K562 (cell line): ENCODE measurements at regions of chr22 and their contacts with region 1.

Region 1: DNA sequence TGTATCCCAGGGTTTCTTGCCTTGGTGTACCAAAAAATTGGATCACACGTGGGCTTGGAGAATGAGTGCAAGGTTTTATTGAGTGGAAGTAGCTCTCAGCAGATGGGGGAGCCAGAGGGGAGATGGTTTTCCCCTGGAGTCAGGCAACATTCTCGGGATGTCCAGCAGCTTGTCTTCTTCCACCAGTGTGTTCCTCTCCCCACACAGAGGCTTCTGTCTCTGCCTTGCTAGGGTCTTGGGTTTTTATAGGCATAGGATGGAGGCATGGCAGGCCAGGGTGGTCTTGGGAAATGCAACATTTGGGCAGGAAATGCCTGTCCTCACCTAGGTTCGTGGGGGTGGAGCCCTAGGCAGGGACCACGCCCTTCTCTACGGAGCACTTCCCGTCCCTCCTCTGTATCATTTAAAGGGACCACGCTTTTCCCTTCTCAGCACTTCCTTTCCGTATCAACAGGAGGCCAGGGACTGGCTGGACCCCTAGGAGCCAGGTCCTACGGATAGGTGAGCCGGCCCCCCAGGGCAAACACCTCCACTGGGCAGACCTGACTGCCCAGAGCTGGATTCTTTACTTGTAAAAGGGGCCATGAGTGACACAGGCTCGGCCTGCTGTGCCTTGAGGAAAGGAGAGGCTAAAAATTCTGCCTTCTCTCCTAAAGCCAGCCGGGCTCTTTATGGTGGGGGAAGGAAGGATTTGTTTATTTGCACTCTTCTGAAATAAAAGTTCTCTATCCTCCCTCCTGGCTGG is 55.3 kb upstream of the CCDC188 start:
- DNase-seq: peak; percentile 94 to 99 (median 96)
- ATAC-seq: peak; percentile 92
- H3K4me3 ChIP-seq: peak overlapping the region; percentile 53
- H3K27ac ChIP-seq: peak overlapping the region; percentile 67
- H3K4me1 ChIP-seq: peaks cover 23 to 83% of the 10 kb centered on the region in 2 experiments
- H3K27me3 ChIP-seq: peaks cover 19 to 24% of the 10 kb centered on the region in 2 experiments; a peak in 4 of 5 replicates
- CTCF ChIP-seq: peak in 1 of 3 experiments; percentile 18; a peak in 2 of 6 replicates
- EP300 ChIP-seq: peak; percentile 20; the same call in 1 of the 2 replicates
- POLR2A ChIP-seq: peak; percentile 97
- RAD21 ChIP-seq: no peak

Region 2: GRCh38 chr22:19772422-19773324 is 433.5 kb before region 1 on chr22:
- CTCF ChIA-PET with region 1: no interaction called
- POLR2A ChIA-PET with region 1: interaction called, 3 read pairs
- in situ Hi-C with region 1: no loop called
- intact Hi-C with region 1: loop called (anchors 5 kb)
- DNase-seq: peak; percentile 65 to 73 (median 69)
- ATAC-seq: peak; percentile 54
- H3K4me3 ChIP-seq: no peak overlapping the region
- H3K27ac ChIP-seq: peak overlapping the region; percentile 11; the same call in 1 of the 3 replicates
- H3K4me1 ChIP-seq: peaks cover 38 to 77% of the 10 kb centered on the region in 2 experiments
- H3K27me3 ChIP-seq: peaks cover 0 to 9% of the 10 kb centered on the region in 2 experiments; a peak in 2 of 5 replicates
- CTCF ChIP-seq: peak in 2 of 3 experiments; percentile 34 to 37; a peak in 2 of 6 replicates
- EP300 ChIP-seq: no peak
- POLR2A ChIP-seq: no peak
- RAD21 ChIP-seq: peak in 1 of 2 experiments; percentile 51; a peak in 2 of 4 replicates

Region 3: DNA sequence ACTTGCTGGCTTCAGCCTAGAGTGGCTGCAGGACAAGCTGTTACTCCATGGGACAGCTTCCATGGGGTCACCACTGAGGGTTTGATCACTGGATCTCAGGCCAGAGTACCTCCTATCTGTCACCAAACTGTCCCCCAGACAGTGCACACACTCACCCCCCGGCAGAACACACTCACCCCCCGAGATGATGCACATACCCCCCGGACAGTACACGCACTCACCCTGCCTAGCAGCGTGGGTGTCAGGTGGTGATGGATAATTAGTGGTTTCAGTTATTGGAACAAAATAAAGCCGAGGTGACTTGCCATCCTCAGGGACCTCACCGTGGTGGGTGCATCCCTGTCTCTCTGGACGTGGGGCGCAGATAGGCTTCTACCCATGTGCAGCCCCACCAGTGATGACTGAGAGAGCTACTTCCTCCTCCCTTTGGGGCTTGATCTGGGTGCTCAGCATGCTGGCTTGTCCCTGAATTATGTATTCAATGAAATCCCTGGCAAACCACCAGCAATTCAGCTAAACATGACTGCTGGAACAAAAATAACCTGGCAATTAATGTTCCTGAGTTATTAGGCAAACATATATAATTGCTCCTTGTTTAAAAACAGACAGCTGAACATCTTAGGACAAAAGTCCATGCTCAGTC is 166.3 kb before region 1 on chr22:
- CTCF ChIA-PET with region 1: no interaction called
- POLR2A ChIA-PET with region 1: no interaction called
- in situ Hi-C with region 1: no loop called
- intact Hi-C with region 1: no loop called
- DNase-seq: no peak
- ATAC-seq: no peak
- H3K4me3 ChIP-seq: no peak overlapping the region
- H3K27ac ChIP-seq: no peak overlapping the region
- H3K4me1 ChIP-seq: peaks cover 11 to 42% of the 10 kb centered on the region in 2 experiments; a peak in 4 of 5 replicates
- H3K27me3 ChIP-seq: no peaks in the 10 kb centered on the region
- CTCF ChIP-seq: no peak
- EP300 ChIP-seq: no peak
- POLR2A ChIP-seq: 0 out of 2 replicates have a peak, but pooled peaks have one; percentile 14
- RAD21 ChIP-seq: no peak

Region 4: GRCh38 chr22:20164863-20165262 is 41.3 kb before region 1 on chr22:
- CTCF ChIA-PET with region 1: no interaction called
- POLR2A ChIA-PET with region 1: interaction called, 6 read pairs
- in situ Hi-C with region 1: no loop called
- intact Hi-C with region 1: loop called (anchors 5 kb)
- DNase-seq: no peak
- ATAC-seq: no peak
- H3K4me3 ChIP-seq: no peak overlapping the region
- H3K27ac ChIP-seq: no peak overlapping the region
- H3K4me1 ChIP-seq: peaks cover 0 to 18% of the 10 kb centered on the region in 2 experiments; a peak in 1 of 5 replicates
- H3K27me3 ChIP-seq: peaks cover 39 to 54% of the 10 kb centered on the region in 2 experiments; a peak in 4 of 5 replicates
- CTCF ChIP-seq: no peak
- EP300 ChIP-seq: no peak
- POLR2A ChIP-seq: no peak
- RAD21 ChIP-seq: no peak

Region 5: DNA sequence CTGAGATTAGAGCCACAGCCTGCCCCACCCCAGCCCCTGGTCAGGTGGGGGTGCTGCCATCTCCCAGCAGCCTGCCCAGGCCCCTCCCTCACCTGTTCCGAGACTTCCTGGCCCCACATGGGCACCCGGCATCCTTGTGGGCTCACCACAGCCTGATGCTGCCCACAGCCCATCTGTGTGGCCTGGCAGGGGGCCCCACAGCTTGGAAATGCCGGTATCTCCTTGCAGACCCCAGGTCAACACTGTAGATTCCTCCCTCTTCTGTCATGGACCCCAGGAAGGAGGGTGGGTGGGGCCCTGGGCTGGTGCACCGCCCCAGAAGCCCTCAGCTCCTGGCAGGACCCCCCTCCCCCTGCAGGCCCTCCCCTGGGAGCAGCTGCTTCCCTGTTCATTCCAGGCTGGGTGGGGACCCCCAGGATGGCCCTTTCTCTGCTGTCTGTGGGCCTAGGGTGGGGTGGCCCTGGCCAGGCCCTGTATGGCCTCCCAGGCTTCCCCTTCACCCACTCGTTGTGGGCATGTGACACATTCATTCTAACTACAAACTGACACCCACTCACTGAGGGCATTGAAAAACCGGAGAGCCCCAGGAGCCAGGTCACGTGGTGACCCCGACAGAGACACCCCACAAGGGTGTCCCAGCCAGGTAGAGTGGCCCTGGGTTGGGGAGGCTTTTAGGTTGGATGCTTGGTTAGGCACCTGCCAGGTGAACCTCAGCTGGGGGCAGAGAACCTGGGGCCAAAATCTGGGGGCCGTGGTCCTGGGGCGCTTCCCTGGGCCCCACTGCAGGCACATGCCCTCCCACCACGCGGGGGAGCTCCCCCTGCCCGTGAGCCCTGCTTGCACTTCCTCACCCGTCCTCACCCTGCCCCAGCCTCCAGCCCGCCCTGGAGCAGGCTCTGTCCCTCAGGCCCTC is 11.2 kb before region 1 on chr22:
- CTCF ChIA-PET with region 1: no interaction called
- POLR2A ChIA-PET with region 1: interaction called, 12 read pairs
- in situ Hi-C with region 1: no loop called
- intact Hi-C with region 1: no loop called
- DNase-seq: no peak
- ATAC-seq: peak; percentile 27; the same call in 2 of the 3 replicates
- H3K4me3 ChIP-seq: no peak overlapping the region
- H3K27ac ChIP-seq: no peak overlapping the region
- H3K4me1 ChIP-seq: peaks cover 0 to 49% of the 10 kb centered on the region in 2 experiments; a peak in 2 of 5 replicates
- H3K27me3 ChIP-seq: peaks cover 84 to 95% of the 10 kb centered on the region in 2 experiments
- CTCF ChIP-seq: peak; percentile 29 to 57 (median 39); a peak in 5 of 6 replicates
- EP300 ChIP-seq: no peak
- POLR2A ChIP-seq: no peak
- RAD21 ChIP-seq: peak in 1 of 2 experiments; percentile 29; a peak in 1 of 4 replicates

Region 6: DNA sequence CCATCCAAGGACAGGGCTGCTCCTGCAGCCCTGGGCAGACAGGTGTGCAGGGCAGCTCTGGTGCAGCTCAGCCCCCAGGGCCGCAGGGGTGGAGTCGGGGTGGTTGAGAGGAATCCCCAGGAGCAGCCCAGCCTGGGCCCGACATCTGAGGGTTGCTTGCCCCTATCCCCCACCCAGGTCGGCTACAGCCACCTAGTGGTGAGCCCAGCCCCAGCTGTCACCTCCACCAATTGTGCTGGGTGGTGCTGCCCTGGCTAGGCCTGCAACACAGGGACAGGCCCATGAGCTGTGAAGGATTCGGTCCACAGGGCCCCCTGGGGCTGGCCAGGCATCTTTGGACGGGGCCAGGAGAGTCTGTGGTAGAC is 32.4 kb after region 1 on chr22:
- CTCF ChIA-PET with region 1: no interaction called
- POLR2A ChIA-PET with region 1: interaction called, 8 read pairs
- in situ Hi-C with region 1: no loop called
- intact Hi-C with region 1: loop called (anchors 2 kb)
- DNase-seq: peak; percentile 89 to 99 (median 98)
- ATAC-seq: peak; percentile 91
- H3K4me3 ChIP-seq: no peak overlapping the region
- H3K27ac ChIP-seq: no peak overlapping the region
- H3K4me1 ChIP-seq: peaks cover 7 to 86% of the 10 kb centered on the region in 2 experiments; a peak in 3 of 5 replicates
- H3K27me3 ChIP-seq: peaks cover 43 to 98% of the 10 kb centered on the region in 2 experiments
- CTCF ChIP-seq: peak; percentile 98 to 99 (median 99)
- EP300 ChIP-seq: no peak
- POLR2A ChIP-seq: no peak
- RAD21 ChIP-seq: peak in 1 of 2 experiments; percentile 97; a peak in 2 of 4 replicates

Region 7: GRCh38 chr22:20268279-20269012 is 62.3 kb after region 1 on chr22 and contains the start of gene RTN4R:
- CTCF ChIA-PET with region 1: interaction called, 10 read pairs
- POLR2A ChIA-PET with region 1: interaction called, 3 read pairs
- in situ Hi-C with region 1: no loop called
- intact Hi-C with region 1: loop called (anchors 1 kb)
- DNase-seq: peak; percentile 93 to 99 (median 96)
- ATAC-seq: peak; percentile 90
- H3K4me3 ChIP-seq: peak within 1 kb of the TSS; percentile 48
- H3K27ac ChIP-seq: no peak within 1 kb of the TSS
- H3K4me1 ChIP-seq: peaks cover 4 to 69% of the 10 kb centered on the region in 2 experiments; a peak in 4 of 5 replicates
- H3K27me3 ChIP-seq: peaks cover 19 to 69% of the 10 kb centered on the region in 2 experiments; a peak in 4 of 5 replicates
- CTCF ChIP-seq: peak; percentile 87 to 99 (median 98)
- EP300 ChIP-seq: peak; percentile 52
- POLR2A ChIP-seq: no peak
- RAD21 ChIP-seq: peak; percentile 98 to 99
- polyA plus RNA-seq, gene RTN4R: 0.04 TPM in 1 of 2 experiments, not detected in the other